Caco-2 (cell line): ENCODE measurements at regions of chr4 and their contacts with region 1.

Region 1: GRCh38 chr4:174764105-174764729 is 64.8 kb downstream of the GLRA3 start:
- DNase-seq: peak in 1 of 2 experiments; percentile 41
- H3K4me3 ChIP-seq: no peak overlapping the region
- H3K4me3 Mint-ChIP-seq: no peak overlapping the region
- H3K27ac Mint-ChIP-seq: no peak overlapping the region
- H3K4me1 ChIP-seq: no peaks in the 10 kb centered on the region
- H3K4me1 Mint-ChIP-seq: peaks cover 11% of the 10 kb centered on the region
- H3K27me3 ChIP-seq: no peaks in the 10 kb centered on the region
- H3K27me3 Mint-ChIP-seq: no peaks in the 10 kb centered on the region
- CTCF ChIP-seq: peak; percentile 52 to 54

Region 2: GRCh38 chr4:174398728-174399127 is 365.5 kb before region 1 on chr4:
- CTCF ChIA-PET with region 1: no interaction called
- POLR2A ChIA-PET with region 1: no interaction called
- intact Hi-C with region 1: no loop called
- DNase-seq: no peak
- H3K4me3 ChIP-seq: no peak overlapping the region
- H3K4me3 Mint-ChIP-seq: no peak overlapping the region
- H3K27ac Mint-ChIP-seq: peak overlapping the region; percentile 72
- H3K4me1 ChIP-seq: peaks cover 52% of the 10 kb centered on the region
- H3K4me1 Mint-ChIP-seq: peaks cover 28% of the 10 kb centered on the region
- H3K27me3 ChIP-seq: no peaks in the 10 kb centered on the region
- H3K27me3 Mint-ChIP-seq: no peaks in the 10 kb centered on the region
- CTCF ChIP-seq: no peak

Region 3: GRCh38 chr4:174646326-174646725 is 117.9 kb before region 1 on chr4:
- CTCF ChIA-PET with region 1: no interaction called
- POLR2A ChIA-PET with region 1: no interaction called
- intact Hi-C with region 1: no loop called
- DNase-seq: no peak
- H3K4me3 ChIP-seq: no peak overlapping the region
- H3K4me3 Mint-ChIP-seq: no peak overlapping the region
- H3K27ac Mint-ChIP-seq: no peak overlapping the region
- H3K4me1 ChIP-seq: no peaks in the 10 kb centered on the region
- H3K4me1 Mint-ChIP-seq: no peaks in the 10 kb centered on the region
- H3K27me3 ChIP-seq: no peaks in the 10 kb centered on the region
- H3K27me3 Mint-ChIP-seq: no peaks in the 10 kb centered on the region
- CTCF ChIP-seq: no peak

Region 4: GRCh38 chr4:174697202-174697601 is 67.0 kb before region 1 on chr4:
- CTCF ChIA-PET with region 1: no interaction called
- POLR2A ChIA-PET with region 1: no interaction called
- intact Hi-C with region 1: no loop called
- DNase-seq: no peak
- H3K4me3 ChIP-seq: no peak overlapping the region
- H3K4me3 Mint-ChIP-seq: no peak overlapping the region
- H3K27ac Mint-ChIP-seq: no peak overlapping the region
- H3K4me1 ChIP-seq: no peaks in the 10 kb centered on the region
- H3K4me1 Mint-ChIP-seq: no peaks in the 10 kb centered on the region
- H3K27me3 ChIP-seq: no peaks in the 10 kb centered on the region
- H3K27me3 Mint-ChIP-seq: peaks cover 9% of the 10 kb centered on the region
- CTCF ChIP-seq: no peak

Region 5: GRCh38 chr4:174928174-174928573 is 164.0 kb after region 1 on chr4:
- CTCF ChIA-PET with region 1: no interaction called
- POLR2A ChIA-PET with region 1: no interaction called
- intact Hi-C with region 1: loop called (anchors 10 kb)
- DNase-seq: no peak
- H3K4me3 ChIP-seq: no peak overlapping the region
- H3K4me3 Mint-ChIP-seq: no peak overlapping the region
- H3K27ac Mint-ChIP-seq: no peak overlapping the region
- H3K4me1 ChIP-seq: no peaks in the 10 kb centered on the region
- H3K4me1 Mint-ChIP-seq: no peaks in the 10 kb centered on the region
- H3K27me3 ChIP-seq: no peaks in the 10 kb centered on the region
- H3K27me3 Mint-ChIP-seq: no peaks in the 10 kb centered on the region
- CTCF ChIP-seq: no peak

Region 6: GRCh38 chr4:175054980-175055379 is 290.8 kb after region 1 on chr4:
- CTCF ChIA-PET with region 1: no interaction called
- POLR2A ChIA-PET with region 1: no interaction called
- intact Hi-C with region 1: loop called (anchors 10 kb)
- DNase-seq: no peak
- H3K4me3 ChIP-seq: no peak overlapping the region
- H3K4me3 Mint-ChIP-seq: no peak overlapping the region
- H3K27ac Mint-ChIP-seq: no peak overlapping the region
- H3K4me1 ChIP-seq: no peaks in the 10 kb centered on the region
- H3K4me1 Mint-ChIP-seq: no peaks in the 10 kb centered on the region
- H3K27me3 ChIP-seq: no peaks in the 10 kb centered on the region
- H3K27me3 Mint-ChIP-seq: no peaks in the 10 kb centered on the region
- CTCF ChIP-seq: peak in 1 of 2 experiments; percentile 3

Region 7: DNA sequence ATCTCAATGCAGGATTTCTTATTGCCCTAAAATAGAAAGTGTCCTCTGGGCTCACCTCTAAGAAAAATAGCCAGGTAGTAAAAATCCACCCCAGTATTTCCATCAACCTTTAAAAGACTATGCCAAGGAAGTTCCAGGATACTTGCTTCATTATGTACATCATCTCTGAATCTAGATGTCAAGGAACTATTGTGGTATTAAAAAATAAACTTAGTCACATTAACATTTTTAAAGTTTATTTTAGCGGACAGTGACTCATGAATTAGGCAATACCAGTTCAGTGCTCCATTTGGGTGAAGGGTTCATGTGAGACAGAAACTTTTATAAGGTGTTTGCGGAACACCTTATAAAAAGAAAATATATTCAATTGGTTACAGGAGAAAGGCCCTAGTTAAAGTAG is 363.1 kb after region 1 on chr4:
- CTCF ChIA-PET with region 1: no interaction called
- POLR2A ChIA-PET with region 1: no interaction called
- intact Hi-C with region 1: loop called (anchors 10 kb)
- DNase-seq: no peak
- H3K4me3 ChIP-seq: no peak overlapping the region
- H3K4me3 Mint-ChIP-seq: no peak overlapping the region
- H3K27ac Mint-ChIP-seq: no peak overlapping the region
- H3K4me1 ChIP-seq: no peaks in the 10 kb centered on the region
- H3K4me1 Mint-ChIP-seq: no peaks in the 10 kb centered on the region
- H3K27me3 ChIP-seq: no peaks in the 10 kb centered on the region
- H3K27me3 Mint-ChIP-seq: no peaks in the 10 kb centered on the region
- CTCF ChIP-seq: no peak

Region 8: GRCh38 chr4:175166020-175166419 is 401.8 kb after region 1 on chr4:
- CTCF ChIA-PET with region 1: no interaction called
- POLR2A ChIA-PET with region 1: no interaction called
- intact Hi-C with region 1: loop called (anchors 5 kb)
- DNase-seq: no peak
- H3K4me3 ChIP-seq: no peak overlapping the region
- H3K4me3 Mint-ChIP-seq: no peak overlapping the region
- H3K27ac Mint-ChIP-seq: no peak overlapping the region
- H3K4me1 ChIP-seq: no peaks in the 10 kb centered on the region
- H3K4me1 Mint-ChIP-seq: no peaks in the 10 kb centered on the region
- H3K27me3 ChIP-seq: no peaks in the 10 kb centered on the region
- H3K27me3 Mint-ChIP-seq: peaks cover 6% of the 10 kb centered on the region
- CTCF ChIP-seq: no peak

Region 9: DNA sequence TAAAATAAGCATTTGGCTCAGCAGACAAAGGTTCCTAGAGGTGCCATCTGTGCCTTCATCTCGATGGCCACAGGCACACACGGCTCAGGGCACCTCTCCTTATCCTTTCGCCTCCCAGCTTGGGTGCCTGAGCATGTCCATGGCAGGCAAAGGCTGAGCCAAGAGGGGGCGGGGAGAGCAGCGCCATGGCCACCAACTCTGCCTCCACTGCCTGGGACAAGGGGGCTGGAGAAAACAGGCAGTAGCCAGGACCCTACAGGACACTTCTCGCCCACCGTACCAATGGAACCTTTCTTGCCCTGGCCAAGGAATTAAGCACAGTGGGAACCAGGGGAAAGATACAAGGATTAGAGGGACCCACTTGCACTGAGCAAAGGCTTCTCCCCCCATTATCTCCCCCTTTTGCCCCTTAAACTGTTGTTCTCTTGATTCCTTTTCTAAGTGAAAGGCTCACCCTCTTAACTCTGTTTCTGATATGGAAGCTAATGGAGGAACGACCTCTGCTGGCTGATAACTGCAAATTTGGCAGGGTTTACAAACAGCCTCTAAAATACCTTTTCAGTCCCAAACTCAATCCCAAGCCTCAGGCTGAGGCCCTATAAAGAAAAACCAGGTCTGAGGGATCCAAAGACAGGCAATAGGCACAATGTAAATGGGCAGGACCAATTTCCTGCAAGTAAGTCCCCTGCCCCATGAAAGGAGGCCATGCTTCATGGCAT is 489.1 kb after region 1 on chr4:
- CTCF ChIA-PET with region 1: interaction called, 8 read pairs
- POLR2A ChIA-PET with region 1: no interaction called
- intact Hi-C with region 1: loop called (anchors 1 kb)
- DNase-seq: peak in 1 of 2 experiments; percentile 9
- H3K4me3 ChIP-seq: no peak overlapping the region
- H3K4me3 Mint-ChIP-seq: no peak overlapping the region
- H3K27ac Mint-ChIP-seq: no peak overlapping the region
- H3K4me1 ChIP-seq: no peaks in the 10 kb centered on the region
- H3K4me1 Mint-ChIP-seq: no peaks in the 10 kb centered on the region
- H3K27me3 ChIP-seq: no peaks in the 10 kb centered on the region
- H3K27me3 Mint-ChIP-seq: no peaks in the 10 kb centered on the region
- CTCF ChIP-seq: peak in 1 of 2 experiments; percentile 32

Region 10: DNA sequence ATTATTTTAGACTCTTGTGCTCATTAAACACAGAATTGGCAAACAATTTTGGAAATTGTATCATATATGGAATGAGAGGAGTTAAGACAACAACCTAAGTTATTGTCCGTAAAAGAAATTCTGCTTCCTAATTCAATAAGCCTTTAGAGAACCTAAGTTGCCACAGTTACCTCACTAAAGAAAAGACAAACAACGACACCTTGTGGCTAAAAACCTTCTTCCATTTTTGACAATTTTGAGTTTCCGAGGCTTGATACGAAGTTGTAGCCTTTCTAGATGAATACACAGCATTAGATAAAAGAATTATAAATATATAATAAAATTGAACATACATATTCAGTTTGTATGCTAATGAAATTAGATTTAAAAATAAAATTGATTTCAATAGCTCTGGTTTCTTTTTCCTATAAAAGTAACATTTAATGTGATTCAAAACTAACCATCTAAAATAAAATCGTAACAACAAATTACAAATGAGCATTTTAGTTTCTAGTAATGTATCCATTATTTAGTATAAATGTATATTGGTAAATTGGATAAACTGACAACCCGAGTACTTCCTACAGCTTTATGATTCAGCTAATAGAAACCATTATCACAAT is 772.7 kb after region 1 on chr4:
- CTCF ChIA-PET with region 1: no interaction called
- POLR2A ChIA-PET with region 1: no interaction called
- intact Hi-C with region 1: loop called (anchors 1 kb)
- DNase-seq: peak in 1 of 2 experiments; percentile 42
- H3K4me3 ChIP-seq: no peak overlapping the region
- H3K4me3 Mint-ChIP-seq: no peak overlapping the region
- H3K27ac Mint-ChIP-seq: no peak overlapping the region
- H3K4me1 ChIP-seq: no peaks in the 10 kb centered on the region
- H3K4me1 Mint-ChIP-seq: no peaks in the 10 kb centered on the region
- H3K27me3 ChIP-seq: no peaks in the 10 kb centered on the region
- H3K27me3 Mint-ChIP-seq: no peaks in the 10 kb centered on the region
- CTCF ChIP-seq: peak; percentile 32 to 61